A673 (cell line): ENCODE measurements at regions of chr12 and their contacts with region 1.

Region 1: DNA sequence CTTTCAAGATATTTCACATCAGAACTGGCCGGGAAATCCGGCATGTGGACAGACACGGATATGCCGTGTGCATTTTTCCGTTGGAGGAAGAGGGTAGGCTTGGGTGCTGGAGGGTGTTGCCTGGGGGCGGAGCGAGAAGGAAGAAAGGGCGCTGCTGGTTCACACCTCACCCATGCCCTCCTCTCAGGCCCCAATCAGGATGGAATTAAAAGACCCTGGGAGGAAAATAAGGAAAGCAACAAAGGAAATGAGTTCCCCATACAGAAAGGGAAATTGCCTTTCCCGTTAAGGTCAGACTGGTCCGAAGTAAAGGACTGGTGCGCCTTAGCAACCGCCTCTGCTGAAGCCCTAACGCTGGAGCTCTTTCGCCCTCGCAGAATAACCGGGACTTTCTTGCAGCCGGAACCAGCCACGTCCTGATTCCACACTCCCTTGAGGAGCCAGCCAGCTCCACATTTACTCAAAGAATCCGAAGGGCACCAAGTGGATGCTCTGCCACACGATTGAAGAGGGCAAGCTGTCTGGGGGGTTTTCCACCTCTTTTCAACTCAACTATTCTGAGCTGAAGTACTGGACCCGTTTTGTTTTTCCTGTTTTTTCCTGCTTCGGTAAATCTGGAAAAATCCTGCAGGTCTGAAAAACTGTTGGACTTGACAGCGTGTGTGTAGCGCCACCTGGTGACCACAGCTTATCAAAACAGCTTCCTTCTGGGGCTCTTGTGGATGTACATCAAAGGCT is 37.7 kb upstream of the BCL2L14 start:
- DNase-seq: peak; percentile 84
- H3K4me3 ChIP-seq: peak overlapping the region; percentile 33
- H3K27ac ChIP-seq: peak overlapping the region; percentile 43
- H3K4me1 ChIP-seq: peaks cover 5% of the 10 kb centered on the region
- H3K27me3 ChIP-seq: no peaks in the 10 kb centered on the region
- CTCF ChIP-seq: peak; percentile 91

Region 2: GRCh38 chr12:10771132-10771733 is 1261.8 kb before region 1 on chr12:
- CTCF ChIA-PET with region 1: no interaction called
- POLR2A ChIA-PET with region 1: no interaction called
- intact Hi-C with region 1: loop called (anchors 10 kb)
- DNase-seq: peak; percentile 59
- H3K4me3 ChIP-seq: no peak overlapping the region
- H3K27ac ChIP-seq: no peak overlapping the region
- H3K4me1 ChIP-seq: no peaks in the 10 kb centered on the region
- H3K27me3 ChIP-seq: peaks cover 29% of the 10 kb centered on the region
- CTCF ChIP-seq: peak; percentile 76

Region 3: GRCh38 chr12:11497995-11498394 is 535.0 kb before region 1 on chr12:
- CTCF ChIA-PET with region 1: no interaction called
- POLR2A ChIA-PET with region 1: no interaction called
- intact Hi-C with region 1: loop called (anchors 5 kb)
- DNase-seq: no peak
- H3K4me3 ChIP-seq: no peak overlapping the region
- H3K27ac ChIP-seq: no peak overlapping the region
- H3K4me1 ChIP-seq: no peaks in the 10 kb centered on the region
- H3K27me3 ChIP-seq: peaks cover 10% of the 10 kb centered on the region
- CTCF ChIP-seq: no peak

Region 4: GRCh38 chr12:11553871-11554533 is 479.0 kb before region 1 on chr12:
- CTCF ChIA-PET with region 1: interaction called, 4 read pairs
- POLR2A ChIA-PET with region 1: interaction called, 4 read pairs
- intact Hi-C with region 1: loop called (anchors 1 kb)
- DNase-seq: peak; percentile 79
- H3K4me3 ChIP-seq: no peak overlapping the region
- H3K27ac ChIP-seq: no peak overlapping the region
- H3K4me1 ChIP-seq: no peaks in the 10 kb centered on the region
- H3K27me3 ChIP-seq: no peaks in the 10 kb centered on the region
- CTCF ChIP-seq: peak; percentile 74

Region 5: GRCh38 chr12:12017798-12018197 is 15.2 kb before region 1 on chr12:
- CTCF ChIA-PET with region 1: interaction called, 12 read pairs
- POLR2A ChIA-PET with region 1: no interaction called
- intact Hi-C with region 1: no loop called
- DNase-seq: peak; percentile 60
- H3K4me3 ChIP-seq: no peak overlapping the region
- H3K27ac ChIP-seq: no peak overlapping the region
- H3K4me1 ChIP-seq: peaks cover 27% of the 10 kb centered on the region
- H3K27me3 ChIP-seq: no peaks in the 10 kb centered on the region
- CTCF ChIP-seq: peak; percentile 75

Region 6: DNA sequence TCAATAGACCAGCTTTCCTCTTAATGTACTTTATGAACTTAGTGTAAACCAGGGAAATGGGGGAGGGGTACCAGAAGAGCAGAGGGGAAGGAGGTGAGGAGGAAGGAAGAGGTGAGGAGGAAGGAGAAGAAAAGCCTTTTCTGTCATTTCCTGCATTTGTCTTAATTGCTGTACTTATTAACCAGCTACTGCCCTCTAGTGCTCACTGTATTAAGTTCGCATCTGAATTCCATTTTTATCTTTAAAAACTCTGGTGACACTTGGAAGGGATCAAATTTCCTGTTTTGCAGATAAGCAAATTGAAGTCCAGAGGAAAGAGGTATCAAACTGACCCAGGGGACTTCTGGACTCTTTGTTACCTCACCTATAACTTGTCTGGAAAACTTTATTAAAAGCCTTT is 294.8 kb after region 1 on chr12:
- CTCF ChIA-PET with region 1: interaction called, 13 read pairs
- POLR2A ChIA-PET with region 1: no interaction called
- intact Hi-C with region 1: loop called (anchors 1 kb)
- DNase-seq: peak; percentile 86
- H3K4me3 ChIP-seq: no peak overlapping the region
- H3K27ac ChIP-seq: peak overlapping the region; percentile 51
- H3K4me1 ChIP-seq: peaks cover 19% of the 10 kb centered on the region
- H3K27me3 ChIP-seq: no peaks in the 10 kb centered on the region
- CTCF ChIP-seq: peak; percentile 76

Region 7: GRCh38 chr12:12704593-12705230 is 671.7 kb after region 1 on chr12:
- CTCF ChIA-PET with region 1: no interaction called
- POLR2A ChIA-PET with region 1: no interaction called
- intact Hi-C with region 1: loop called (anchors 2 kb)
- DNase-seq: peak; percentile 92
- H3K4me3 ChIP-seq: no peak overlapping the region
- H3K27ac ChIP-seq: no peak overlapping the region
- H3K4me1 ChIP-seq: peaks cover 12% of the 10 kb centered on the region
- H3K27me3 ChIP-seq: no peaks in the 10 kb centered on the region
- CTCF ChIP-seq: peak; percentile 89